ENCODE measurements at regions of chr6 and their contacts with region 1.

Region 1: GRCh38 chr6:42440778-42441696 is 10.7 kb downstream of the TRERF1 start:
- DNase-seq: peak; percentile 81
- ATAC-seq: peak; percentile 66
- H3K4me3 ChIP-seq: peak overlapping the region; percentile 2; the same call in 1 of the 2 replicates
- H3K27ac ChIP-seq: peak overlapping the region; percentile 81
- H3K4me1 ChIP-seq: peaks cover 44% of the 10 kb centered on the region
- H3K27me3 ChIP-seq: no peaks in the 10 kb centered on the region
- CTCF ChIP-seq: no peak
- POLR2A ChIP-seq: no peak
- RAD21 ChIP-seq: no peak

Region 2: GRCh38 chr6:42118162-42119001 is 322.7 kb before region 1 on chr6:
- CTCF ChIA-PET with region 1: no interaction called
- POLR2A ChIA-PET with region 1: no interaction called
- dilution Hi-C with region 1: no loop called
- in situ Hi-C with region 1: no loop called
- intact Hi-C with region 1: no loop called
- DNase-seq: no peak
- ATAC-seq: peak; percentile 79
- H3K4me3 ChIP-seq: no peak overlapping the region
- H3K27ac ChIP-seq: no peak overlapping the region
- H3K4me1 ChIP-seq: peaks cover 16% of the 10 kb centered on the region
- H3K27me3 ChIP-seq: no peaks in the 10 kb centered on the region
- CTCF ChIP-seq: no peak
- POLR2A ChIP-seq: no peak
- RAD21 ChIP-seq: no peak

Region 3: DNA sequence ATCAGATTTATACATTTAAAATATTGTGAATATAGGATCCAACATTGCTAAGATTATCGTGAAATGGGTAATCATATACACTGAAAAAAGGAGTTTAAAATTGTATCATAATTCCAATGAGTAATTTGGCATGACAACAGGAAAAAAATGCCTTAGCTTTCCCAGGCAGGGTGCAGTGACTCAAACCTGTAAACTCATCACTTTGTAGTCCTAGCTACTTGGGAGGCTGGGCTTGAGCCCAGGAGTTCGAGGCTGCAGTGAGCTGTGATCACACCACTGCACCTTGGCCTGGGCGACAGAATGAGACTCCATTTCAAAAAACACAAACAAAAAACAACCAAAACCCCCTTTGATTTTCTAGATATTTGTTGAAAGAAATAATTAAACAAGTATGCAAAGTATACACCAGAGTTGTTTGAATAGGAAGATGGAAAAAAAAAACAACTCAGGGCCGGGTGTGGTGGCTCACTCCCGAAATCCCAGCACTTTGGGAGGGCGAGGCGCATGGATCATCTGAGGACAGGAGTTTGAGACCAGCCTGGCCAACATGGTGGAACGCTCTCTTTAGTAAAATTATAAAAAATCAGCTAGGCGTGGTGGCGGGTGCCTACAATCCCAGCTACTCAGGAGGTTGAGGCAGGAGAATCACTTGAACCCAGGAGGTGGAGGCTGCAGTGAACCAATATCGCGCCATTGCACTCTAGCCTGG is 88.0 kb before region 1 on chr6:
- CTCF ChIA-PET with region 1: interaction called, 3 read pairs
- POLR2A ChIA-PET with region 1: interaction called, 4 read pairs
- dilution Hi-C with region 1: no loop called
- in situ Hi-C with region 1: no loop called
- intact Hi-C with region 1: loop called (anchors 10 kb)
- DNase-seq: peak; percentile 90
- ATAC-seq: peak; percentile 62
- H3K4me3 ChIP-seq: no peak overlapping the region
- H3K27ac ChIP-seq: no peak overlapping the region
- H3K4me1 ChIP-seq: peaks cover 12% of the 10 kb centered on the region
- H3K27me3 ChIP-seq: no peaks in the 10 kb centered on the region
- CTCF ChIP-seq: no peak
- POLR2A ChIP-seq: no peak
- RAD21 ChIP-seq: no peak

Region 4: GRCh38 chr6:42378125-42378524 is 62.9 kb before region 1 on chr6:
- CTCF ChIA-PET with region 1: no interaction called
- POLR2A ChIA-PET with region 1: interaction called, 11 read pairs
- dilution Hi-C with region 1: no loop called
- in situ Hi-C with region 1: no loop called
- intact Hi-C with region 1: no loop called
- DNase-seq: no peak
- ATAC-seq: no peak
- H3K4me3 ChIP-seq: no peak overlapping the region
- H3K27ac ChIP-seq: no peak overlapping the region
- H3K4me1 ChIP-seq: peaks cover 5% of the 10 kb centered on the region; the same call in 1 of the 2 replicates
- H3K27me3 ChIP-seq: no peaks in the 10 kb centered on the region
- CTCF ChIP-seq: no peak
- POLR2A ChIP-seq: no peak
- RAD21 ChIP-seq: no peak

Measured in IMR-90 (cell line).